Endothelial cell of umbilical vein (primary cell): ENCODE measurements at regions of chr15 and their contacts with region 1.

Region 1: GRCh38 chr15:35306361-35306981 is 221.4 kb upstream of the NANOGP8 start:
- DNase-seq: peak; percentile 83
- H3K4me3 ChIP-seq: peak overlapping the region in 1 of 3 experiments; percentile 12
- H3K27ac ChIP-seq: peak overlapping the region; percentile 99
- H3K4me1 ChIP-seq: peaks cover 60% of the 10 kb centered on the region
- H3K27me3 ChIP-seq: no peaks in the 10 kb centered on the region
- CTCF ChIP-seq: no peak
- POLR2A ChIP-seq: no peak

Region 2: DNA sequence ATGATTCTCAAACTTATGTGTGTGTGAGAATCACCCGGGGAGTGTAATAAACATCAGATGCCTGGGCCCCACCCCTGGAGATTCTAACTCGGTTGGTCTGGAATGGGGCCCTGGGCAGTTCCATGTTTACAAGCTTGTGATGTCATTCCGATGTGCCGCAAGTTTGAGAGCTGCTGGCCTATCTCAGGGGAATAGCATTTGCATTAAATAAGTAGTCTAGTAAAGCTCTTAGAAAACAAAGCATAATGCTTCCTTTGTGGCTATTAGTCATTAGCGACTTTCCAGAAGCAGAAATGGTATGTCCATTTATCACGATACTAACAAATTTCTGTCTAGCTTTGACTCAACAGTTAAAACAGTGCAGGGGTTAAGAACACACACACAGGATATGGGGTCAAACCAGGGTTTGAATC is 1183.7 kb before region 1 on chr15:
- CTCF ChIA-PET with region 1: no interaction called
- POLR2A ChIA-PET with region 1: no interaction called
- dilution Hi-C with region 1: no loop called
- intact Hi-C with region 1: loop called (anchors 10 kb)
- DNase-seq: peak; percentile 87
- H3K4me3 ChIP-seq: no peak overlapping the region
- H3K27ac ChIP-seq: peak overlapping the region; percentile 85
- H3K4me1 ChIP-seq: peaks cover 16% of the 10 kb centered on the region
- H3K27me3 ChIP-seq: no peaks in the 10 kb centered on the region
- CTCF ChIP-seq: no peak
- POLR2A ChIP-seq: no peak

Region 3: GRCh38 chr15:34987985-34988873 is 318.2 kb before region 1 on chr15 and contains the start of gene ZNF770:
- CTCF ChIA-PET with region 1: no interaction called
- POLR2A ChIA-PET with region 1: no interaction called
- dilution Hi-C with region 1: no loop called
- intact Hi-C with region 1: loop called (anchors 5 kb)
- DNase-seq: peak; percentile 82
- H3K4me3 ChIP-seq: peak within 1 kb of the TSS; percentile 70 to 95 (median 85)
- H3K27ac ChIP-seq: peak within 1 kb of the TSS; percentile 90
- H3K4me1 ChIP-seq: peaks cover 32% of the 10 kb centered on the region
- H3K27me3 ChIP-seq: peaks cover 0 to 4% of the 10 kb centered on the region in 2 experiments
- CTCF ChIP-seq: no peak
- POLR2A ChIP-seq: peak; percentile 93
- total RNA-seq, gene ZNF770: 29.3 and 30.3 TPM in 2 replicates

Region 4: GRCh38 chr15:35427091-35427490 is 120.6 kb after region 1 on chr15:
- CTCF ChIA-PET with region 1: interaction called, 3 read pairs
- POLR2A ChIA-PET with region 1: interaction called, 3 read pairs
- dilution Hi-C with region 1: no loop called
- intact Hi-C with region 1: loop called (anchors 1 kb)
- DNase-seq: peak; percentile 90
- H3K4me3 ChIP-seq: no peak overlapping the region
- H3K27ac ChIP-seq: no peak overlapping the region
- H3K4me1 ChIP-seq: peaks cover 13% of the 10 kb centered on the region
- H3K27me3 ChIP-seq: no peaks in the 10 kb centered on the region
- CTCF ChIP-seq: no peak
- POLR2A ChIP-seq: no peak

Region 5: GRCh38 chr15:35481992-35482391 is 175.5 kb after region 1 on chr15:
- CTCF ChIA-PET with region 1: no interaction called
- POLR2A ChIA-PET with region 1: no interaction called
- dilution Hi-C with region 1: no loop called
- intact Hi-C with region 1: no loop called
- DNase-seq: peak; percentile 67
- H3K4me3 ChIP-seq: no peak overlapping the region
- H3K27ac ChIP-seq: no peak overlapping the region
- H3K4me1 ChIP-seq: peaks cover 23% of the 10 kb centered on the region
- H3K27me3 ChIP-seq: no peaks in the 10 kb centered on the region
- CTCF ChIP-seq: no peak
- POLR2A ChIP-seq: no peak

Region 6: DNA sequence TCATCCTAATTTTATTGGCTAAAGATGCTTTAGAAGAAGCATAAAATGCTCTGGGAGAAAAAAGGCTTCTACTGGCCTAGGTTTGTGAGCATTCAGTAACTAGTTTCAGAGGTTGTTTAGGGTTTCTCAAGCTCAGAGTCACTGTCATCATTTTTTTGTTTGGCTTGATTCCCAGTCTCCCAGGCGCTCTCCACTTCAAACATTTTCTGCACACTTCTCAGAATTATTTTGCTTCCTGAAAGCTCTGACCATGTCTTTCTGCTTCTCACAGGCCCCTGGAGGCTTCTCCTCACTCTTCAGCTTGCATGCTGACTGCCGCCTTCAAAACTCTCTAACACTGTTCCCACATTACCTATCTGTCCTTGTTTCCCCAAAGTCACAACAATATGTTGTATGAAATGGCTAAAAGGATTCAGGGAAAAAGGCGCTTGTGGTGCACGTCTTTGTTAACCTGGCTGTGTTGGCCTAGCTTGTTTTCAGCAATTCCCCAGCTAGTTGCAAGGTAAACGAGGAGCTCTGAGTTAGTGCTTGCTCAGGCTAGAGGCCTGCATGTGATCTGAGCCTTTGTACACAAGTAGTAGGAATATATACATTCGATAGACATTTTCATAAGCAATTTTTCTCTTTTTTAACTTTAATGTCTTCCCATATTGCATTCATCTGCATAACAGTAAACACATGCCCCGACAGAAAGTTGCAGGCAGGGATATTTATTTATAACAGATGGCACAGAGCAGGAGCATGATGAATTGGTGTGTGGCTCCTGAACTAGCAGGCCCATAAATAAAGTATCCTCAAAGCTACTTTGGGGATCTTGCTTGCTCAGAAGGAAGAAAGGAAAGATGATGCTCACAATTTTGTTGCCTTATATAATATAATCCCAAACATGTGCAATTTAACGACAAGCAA is 368.7 kb after region 1 on chr15:
- CTCF ChIA-PET with region 1: no interaction called
- POLR2A ChIA-PET with region 1: no interaction called
- dilution Hi-C with region 1: no loop called
- intact Hi-C with region 1: loop called (anchors 1 kb)
- DNase-seq: peak; percentile 62
- H3K4me3 ChIP-seq: no peak overlapping the region
- H3K27ac ChIP-seq: no peak overlapping the region
- H3K4me1 ChIP-seq: peaks cover 46% of the 10 kb centered on the region
- H3K27me3 ChIP-seq: no peaks in the 10 kb centered on the region
- CTCF ChIP-seq: no peak
- POLR2A ChIP-seq: no peak